Heart left ventricle (tissue), 16 donors: ENCODE measurements at regions of chr1 and their contacts with region 1.

Region 1: GRCh38 chr1:156583821-156584622 is 4.5 kb downstream of the TTC24 start:
- DNase-seq: peak in 4 of 5 donors; percentile 63 to 70 (median 66)
- ATAC-seq: peak in 3 of 4 donors; percentile 27 to 55 (median 54)
- H3K4me3 ChIP-seq: no peak overlapping the region
- H3K27ac ChIP-seq: no peak overlapping the region
- H3K4me1 ChIP-seq: peaks cover 0 to 7% (median 0%) of the 10 kb centered on the region in 12 donors
- H3K27me3 ChIP-seq: no peaks in the 10 kb centered on the region
- CTCF ChIP-seq: peak; percentile 86 to 98 (median 93)
- POLR2A ChIP-seq: no peak

Region 2: DNA sequence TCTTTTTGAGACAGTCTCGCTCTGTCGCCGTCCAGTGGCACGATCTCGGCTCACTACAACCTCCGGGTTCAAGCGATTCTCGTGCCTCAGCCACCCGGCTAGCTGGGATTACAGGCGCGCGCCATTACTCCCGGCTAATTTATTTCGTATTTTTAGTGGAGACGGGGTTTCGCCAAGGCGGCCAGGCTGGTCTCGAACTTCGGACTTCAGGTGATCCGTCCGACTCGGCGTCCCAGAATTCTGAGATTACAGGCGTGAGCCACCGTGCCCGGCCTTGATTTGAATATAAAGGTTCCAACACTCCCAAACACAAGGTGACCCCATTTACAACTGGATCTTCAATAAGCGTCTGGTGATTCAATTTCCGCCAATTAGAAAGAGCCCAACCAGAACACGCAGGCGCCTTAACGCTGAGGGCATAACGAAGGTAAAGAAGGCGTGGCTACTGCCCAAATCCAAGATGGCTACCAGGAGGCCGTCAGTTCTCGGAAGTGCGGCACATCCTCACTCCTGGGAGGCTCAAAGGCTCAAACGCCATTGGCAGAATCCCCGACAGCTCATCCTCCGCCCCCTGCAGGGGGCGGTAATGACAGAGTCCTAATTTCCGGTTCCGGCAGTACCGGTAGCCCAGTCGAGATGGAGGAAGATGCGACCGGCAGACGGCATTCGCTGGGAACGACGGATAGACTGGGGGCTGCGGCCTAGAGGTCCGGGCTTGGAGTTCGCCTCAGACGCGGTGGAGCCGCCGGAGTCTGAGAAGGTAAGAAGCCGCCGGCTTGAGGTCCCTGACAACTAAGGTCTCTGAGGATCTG is 390.3 kb before region 1 on chr1 and contains the start of gene SLC25A44:
- intact Hi-C with region 1: no loop called
- DNase-seq: peak; percentile 96 to 97 (median 97)
- ATAC-seq: peak; percentile 99 to 100 (median 100)
- H3K4me3 ChIP-seq: peak within 1 kb of the TSS; percentile 59 to 99 (median 82)
- H3K27ac ChIP-seq: peak within 1 kb of the TSS in 11 of 12 donors; percentile 74 to 92 (median 88)
- H3K4me1 ChIP-seq: peaks cover 0 to 51% (median 27%) of the 10 kb centered on the region in 12 donors
- H3K27me3 ChIP-seq: no peaks in the 10 kb centered on the region
- CTCF ChIP-seq: peak; percentile 35 to 82 (median 66)
- POLR2A ChIP-seq: peak in 1 of 2 donors; percentile 71
- total RNA-seq, gene SLC25A44: 16.4 to 27.4 (median 20.5) TPM

Region 3: GRCh38 chr1:156510709-156511108 is 73.3 kb before region 1 on chr1:
- intact Hi-C with region 1: loop called in 3 of 10 experiments (anchors 5 kb)
- DNase-seq: peak; percentile 81 to 95 (median 86)
- ATAC-seq: peak; percentile 66 to 79 (median 74)
- H3K4me3 ChIP-seq: no peak overlapping the region
- H3K27ac ChIP-seq: peak overlapping the region; percentile 60 to 100 (median 98)
- H3K4me1 ChIP-seq: peaks cover 3 to 46% (median 33%) of the 10 kb centered on the region in 12 donors
- H3K27me3 ChIP-seq: no peaks in the 10 kb centered on the region
- CTCF ChIP-seq: no peak
- POLR2A ChIP-seq: no peak

Region 4: DNA sequence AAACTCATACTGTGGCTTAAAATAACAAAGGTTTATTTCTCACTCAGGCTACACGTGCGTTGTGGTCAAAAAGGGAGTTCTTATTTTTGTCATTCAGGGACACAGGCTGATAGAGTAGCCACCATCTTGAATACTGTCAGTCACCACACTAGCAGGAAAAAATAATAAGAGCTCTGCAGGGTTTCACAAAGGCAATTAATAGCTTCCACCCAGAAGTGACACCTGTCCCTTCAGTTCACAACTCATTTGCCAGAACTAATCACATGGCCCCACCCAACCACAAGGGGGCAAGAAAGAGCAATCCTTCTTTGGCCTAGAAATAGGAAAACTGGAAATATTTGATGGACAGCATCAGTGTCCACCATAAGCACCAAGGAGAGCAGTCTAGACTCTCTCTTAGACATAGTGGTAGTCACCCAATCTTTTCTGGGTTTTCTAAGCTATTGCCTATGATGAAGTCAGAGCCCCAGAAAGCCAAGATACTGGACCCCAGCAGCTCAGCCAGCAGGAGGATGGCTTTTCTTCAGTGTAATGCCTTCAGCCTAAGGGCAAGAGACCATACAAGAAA is 43.4 kb after region 1 on chr1:
- intact Hi-C with region 1: no loop called
- DNase-seq: no peak
- ATAC-seq: no peak
- H3K4me3 ChIP-seq: no peak overlapping the region
- H3K27ac ChIP-seq: no peak overlapping the region
- H3K4me1 ChIP-seq: peaks cover 5 to 36% (median 22%) of the 10 kb centered on the region in 12 donors
- H3K27me3 ChIP-seq: peaks cover 3 to 85% (median 50%) of the 10 kb centered on the region in 9 donors
- CTCF ChIP-seq: peak; percentile 37 to 71 (median 62)
- POLR2A ChIP-seq: no peak

Region 5: GRCh38 chr1:156638189-156638985 is 54.4 kb after region 1 on chr1:
- intact Hi-C with region 1: no loop called
- DNase-seq: no peak
- ATAC-seq: no peak
- H3K4me3 ChIP-seq: no peak overlapping the region
- H3K27ac ChIP-seq: no peak overlapping the region
- H3K4me1 ChIP-seq: peaks cover 0 to 19% (median 13%) of the 10 kb centered on the region in 12 donors
- H3K27me3 ChIP-seq: peaks cover 24 to 85% (median 50%) of the 10 kb centered on the region in 9 donors
- CTCF ChIP-seq: no peak
- POLR2A ChIP-seq: no peak

Region 6: GRCh38 chr1:156652131-156652991 is 68.3 kb after region 1 on chr1:
- intact Hi-C with region 1: loop called in 9 of 10 experiments (anchors 1 to 5 kb)
- DNase-seq: peak in 1 of 5 donors; percentile 37
- ATAC-seq: no peak
- H3K4me3 ChIP-seq: no peak overlapping the region
- H3K27ac ChIP-seq: no peak overlapping the region
- H3K4me1 ChIP-seq: peaks cover 0 to 11% (median 9%) of the 10 kb centered on the region in 12 donors
- H3K27me3 ChIP-seq: peaks cover 0 to 58% (median 5%) of the 10 kb centered on the region in 9 donors
- CTCF ChIP-seq: no peak
- POLR2A ChIP-seq: no peak